Activated T-helper 2 cell treated with anti-CD3 and anti-CD28 coated beads, Interferon-gamma antibody, Interleukin-2, Interleukin-4, amounts not matched to agents 10 μg/mL and 5 μg/mL and 100 μg/mL, durations not matched to agents 14 hours and 24 hours and 36 hours (primary cell): ENCODE measurements at regions of chr2 and their contacts with region 1.

Region 1: GRCh38 chr2:165513479-165513878 is 44.0 kb downstream of the CSRNP3 start:
- DNase-seq: no peak
- H3K4me3 Mint-ChIP-seq: no peak overlapping the region
- H3K27ac Mint-ChIP-seq: no peak overlapping the region
- H3K4me1 Mint-ChIP-seq: no peaks in the 10 kb centered on the region
- H3K27me3 Mint-ChIP-seq: no peaks in the 10 kb centered on the region

Region 2: DNA sequence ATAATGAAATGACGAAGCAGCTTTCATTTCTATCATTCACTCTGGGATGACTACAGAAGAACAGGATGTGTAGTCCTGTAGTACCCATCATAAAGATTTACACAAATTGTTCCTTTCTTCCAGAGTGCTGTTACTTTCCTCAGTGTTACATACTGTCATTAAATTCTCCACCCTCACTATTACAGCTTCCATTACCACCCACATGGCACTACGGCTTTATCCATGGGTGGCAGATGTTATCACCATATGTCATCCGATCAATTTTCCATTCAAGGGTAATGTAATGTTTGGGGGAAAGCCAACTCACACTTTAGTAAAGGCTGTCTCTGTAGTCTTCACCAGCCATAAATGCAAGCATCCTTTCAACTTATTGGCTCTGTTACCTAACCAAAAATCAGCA is 51.0 kb before region 1 on chr2:
- intact Hi-C with region 1: loop called (anchors 2 kb)
- DNase-seq: no peak
- H3K4me3 Mint-ChIP-seq: no peak overlapping the region
- H3K27ac Mint-ChIP-seq: no peak overlapping the region
- H3K4me1 Mint-ChIP-seq: no peaks in the 10 kb centered on the region
- H3K27me3 Mint-ChIP-seq: no peaks in the 10 kb centered on the region

Region 3: DNA sequence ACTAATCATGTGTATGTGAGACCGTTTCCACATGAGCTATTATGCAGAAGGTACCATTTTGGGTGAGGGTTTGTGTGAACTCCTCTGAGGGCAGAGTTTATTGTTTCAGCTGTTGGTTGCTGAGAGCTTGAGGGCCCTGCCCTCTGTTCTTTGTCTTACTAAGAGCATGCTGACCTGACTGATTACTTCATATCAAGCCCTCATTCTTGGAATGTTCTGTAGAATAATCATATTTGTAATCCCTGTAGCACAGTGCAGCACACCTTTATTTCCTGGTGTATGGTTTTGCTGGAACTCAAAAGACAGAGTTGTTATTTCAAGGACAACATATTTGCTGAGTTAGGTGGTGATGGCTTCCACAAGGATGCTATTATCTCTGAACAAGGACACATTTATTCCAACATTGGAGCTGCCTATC is 162.1 kb after region 1 on chr2:
- intact Hi-C with region 1: no loop called
- DNase-seq: no peak
- H3K4me3 Mint-ChIP-seq: no peak overlapping the region
- H3K27ac Mint-ChIP-seq: no peak overlapping the region
- H3K4me1 Mint-ChIP-seq: no peaks in the 10 kb centered on the region
- H3K27me3 Mint-ChIP-seq: no peaks in the 10 kb centered on the region